Heart left ventricle (tissue), 16 donors: ENCODE measurements at regions of chr1 and their contacts with region 1.

Region 1: GRCh38 chr1:88180449-88181108 is 503.5 kb upstream of the PKN2 start:
- DNase-seq: peak; percentile 58 to 66 (median 62)
- ATAC-seq: peak; percentile 73 to 96 (median 92)
- H3K4me3 ChIP-seq: no peak overlapping the region
- H3K27ac ChIP-seq: no peak overlapping the region
- H3K4me1 ChIP-seq: no peaks in the 10 kb centered on the region
- H3K27me3 ChIP-seq: no peaks in the 10 kb centered on the region
- CTCF ChIP-seq: peak; percentile 78 to 95 (median 88)
- POLR2A ChIP-seq: no peak

Region 2: DNA sequence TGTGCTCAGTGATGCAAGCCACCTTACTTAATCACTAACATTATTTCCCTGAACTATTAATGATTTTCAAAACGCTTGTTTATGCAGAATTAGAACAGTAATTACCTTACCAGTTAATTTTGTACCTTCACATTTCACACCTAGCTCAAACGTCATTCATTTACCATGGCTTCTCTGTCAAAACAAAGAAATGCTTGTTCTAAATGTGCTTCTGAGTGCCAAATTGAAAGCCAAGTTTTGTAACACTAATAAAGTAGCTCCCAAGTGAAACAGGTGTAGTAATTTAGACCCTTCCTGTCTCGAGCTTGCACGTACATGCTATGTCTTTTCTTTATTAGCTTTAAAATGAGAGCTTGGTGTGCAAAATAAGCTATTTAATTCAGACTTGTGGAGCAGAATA is 30.2 kb before region 1 on chr1:
- intact Hi-C with region 1: no loop called
- DNase-seq: no peak
- ATAC-seq: no peak
- H3K4me3 ChIP-seq: no peak overlapping the region
- H3K27ac ChIP-seq: no peak overlapping the region
- H3K4me1 ChIP-seq: no peaks in the 10 kb centered on the region
- H3K27me3 ChIP-seq: no peaks in the 10 kb centered on the region
- CTCF ChIP-seq: no peak
- POLR2A ChIP-seq: no peak

Region 3: GRCh38 chr1:88191917-88192316 is 11.3 kb after region 1 on chr1:
- intact Hi-C with region 1: no loop called
- DNase-seq: no peak
- ATAC-seq: no peak
- H3K4me3 ChIP-seq: no peak overlapping the region
- H3K27ac ChIP-seq: no peak overlapping the region
- H3K4me1 ChIP-seq: no peaks in the 10 kb centered on the region
- H3K27me3 ChIP-seq: peaks cover 0 to 3% (median 0%) of the 10 kb centered on the region in 9 donors
- CTCF ChIP-seq: no peak
- POLR2A ChIP-seq: no peak

Region 4: GRCh38 chr1:88284066-88284465 is 103.5 kb after region 1 on chr1:
- intact Hi-C with region 1: loop called in 1 of 10 experiments (anchors 10 kb)
- DNase-seq: no peak
- ATAC-seq: no peak
- H3K4me3 ChIP-seq: no peak overlapping the region
- H3K27ac ChIP-seq: no peak overlapping the region
- H3K4me1 ChIP-seq: no peaks in the 10 kb centered on the region
- H3K27me3 ChIP-seq: no peaks in the 10 kb centered on the region
- CTCF ChIP-seq: no peak
- POLR2A ChIP-seq: no peak

Region 5: GRCh38 chr1:88291611-88292354 is 111.2 kb after region 1 on chr1:
- intact Hi-C with region 1: loop called in 2 of 10 experiments (anchors 5 to 10 kb)
- DNase-seq: no peak
- ATAC-seq: no peak
- H3K4me3 ChIP-seq: no peak overlapping the region
- H3K27ac ChIP-seq: no peak overlapping the region
- H3K4me1 ChIP-seq: no peaks in the 10 kb centered on the region
- H3K27me3 ChIP-seq: no peaks in the 10 kb centered on the region
- CTCF ChIP-seq: no peak
- POLR2A ChIP-seq: no peak

Region 6: GRCh38 chr1:88302843-88303486 is 122.4 kb after region 1 on chr1:
- intact Hi-C with region 1: loop called in 7 of 10 experiments (anchors 2 to 10 kb)
- DNase-seq: peak in 1 of 5 donors; percentile 16
- ATAC-seq: no peak
- H3K4me3 ChIP-seq: no peak overlapping the region
- H3K27ac ChIP-seq: no peak overlapping the region
- H3K4me1 ChIP-seq: peaks cover 0 to 2% (median 0%) of the 10 kb centered on the region in 12 donors
- H3K27me3 ChIP-seq: no peaks in the 10 kb centered on the region
- CTCF ChIP-seq: peak; percentile 11 to 60 (median 51)
- POLR2A ChIP-seq: no peak

Region 7: GRCh38 chr1:88378566-88378965 is 198.0 kb after region 1 on chr1:
- intact Hi-C with region 1: no loop called
- DNase-seq: no peak
- ATAC-seq: no peak
- H3K4me3 ChIP-seq: no peak overlapping the region
- H3K27ac ChIP-seq: no peak overlapping the region
- H3K4me1 ChIP-seq: no peaks in the 10 kb centered on the region
- H3K27me3 ChIP-seq: no peaks in the 10 kb centered on the region
- CTCF ChIP-seq: no peak
- POLR2A ChIP-seq: no peak

Region 8: GRCh38 chr1:88549536-88549935 is 369.0 kb after region 1 on chr1:
- intact Hi-C with region 1: loop called in 8 of 10 experiments (anchors 5 to 10 kb)
- DNase-seq: no peak
- ATAC-seq: no peak
- H3K4me3 ChIP-seq: no peak overlapping the region
- H3K27ac ChIP-seq: no peak overlapping the region
- H3K4me1 ChIP-seq: no peaks in the 10 kb centered on the region
- H3K27me3 ChIP-seq: no peaks in the 10 kb centered on the region
- CTCF ChIP-seq: peak in 8 of 12 donors; percentile 18 to 50 (median 32)
- POLR2A ChIP-seq: no peak

Region 9: DNA sequence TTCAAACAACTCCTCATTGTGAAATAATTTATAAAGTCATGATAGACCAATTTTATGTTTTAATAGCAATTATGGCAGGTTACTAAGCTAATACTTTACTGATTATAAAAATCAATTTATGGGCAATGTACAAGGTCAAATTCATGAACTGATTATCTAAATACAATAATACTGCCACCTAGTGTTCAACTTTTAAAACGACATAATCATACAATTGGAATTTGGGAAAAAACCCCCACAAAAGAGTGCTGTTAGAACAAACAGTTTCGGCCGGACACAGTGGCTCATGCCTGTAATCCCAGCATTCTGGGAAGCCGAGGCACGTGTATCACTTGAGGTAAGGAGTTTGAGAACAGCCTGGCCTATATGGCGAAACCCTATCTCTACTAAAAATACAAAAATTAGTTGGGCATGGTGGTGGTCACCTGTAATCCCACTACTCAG is 696.8 kb after region 1 on chr1:
- intact Hi-C with region 1: loop called in 1 of 10 experiments (anchors 10 kb)
- DNase-seq: no peak
- ATAC-seq: no peak
- H3K4me3 ChIP-seq: no peak overlapping the region
- H3K27ac ChIP-seq: no peak overlapping the region
- H3K4me1 ChIP-seq: peaks cover 0 to 51% (median 16%) of the 10 kb centered on the region in 12 donors
- H3K27me3 ChIP-seq: no peaks in the 10 kb centered on the region
- CTCF ChIP-seq: peak; percentile 45 to 76 (median 64)
- POLR2A ChIP-seq: no peak